ENCODE measurements at regions of chr1 and their contacts with region 1.

Region 1: DNA sequence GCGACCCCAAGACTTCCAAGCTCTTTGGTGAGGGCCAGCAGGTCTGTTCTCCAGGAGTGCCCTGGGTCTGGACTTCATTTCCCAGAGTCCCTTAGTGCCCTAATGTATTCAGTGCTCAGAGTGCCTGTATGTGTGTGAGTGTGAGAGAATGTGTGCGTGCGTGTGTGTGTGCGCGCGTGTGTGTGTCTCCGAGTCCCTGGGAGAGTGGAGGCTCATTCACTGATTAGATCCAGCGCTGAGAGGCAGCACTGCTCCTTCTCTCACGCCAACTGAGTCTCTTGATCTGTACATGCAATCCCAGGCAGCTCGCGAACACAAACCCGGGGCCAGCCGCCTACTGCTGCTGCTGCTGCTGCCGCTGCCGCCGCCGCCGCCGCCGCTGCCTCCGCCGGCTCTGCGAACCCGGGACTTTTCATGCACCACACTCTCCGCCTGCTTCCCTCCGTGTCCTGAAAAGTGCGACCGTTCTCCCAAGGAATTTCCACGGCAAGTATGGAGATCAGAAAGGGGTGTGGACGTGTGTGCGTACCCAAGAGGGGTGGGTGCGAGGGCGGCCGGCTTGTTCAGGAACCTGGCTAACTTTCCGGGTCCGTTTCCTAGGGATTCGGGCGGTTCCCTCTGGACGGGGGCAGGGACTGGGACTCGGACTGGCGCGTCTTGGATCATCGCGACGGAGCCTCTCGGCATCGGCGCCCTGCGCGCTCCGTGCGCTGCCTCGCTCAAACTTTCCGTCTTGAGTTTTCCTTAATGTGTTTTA is at the start of gene RNF220:
- DNase-seq: peak; percentile 64
- H3K4me3 Mint-ChIP-seq: peak within 1 kb of the TSS; percentile 79
- H3K27ac Mint-ChIP-seq: peak within 1 kb of the TSS; percentile 22
- H3K4me1 Mint-ChIP-seq: peaks cover 30% of the 10 kb centered on the region
- H3K27me3 Mint-ChIP-seq: peaks cover 70% of the 10 kb centered on the region
- total RNA-seq, gene RNF220: 71.6 to 81.6 TPM

Region 2: DNA sequence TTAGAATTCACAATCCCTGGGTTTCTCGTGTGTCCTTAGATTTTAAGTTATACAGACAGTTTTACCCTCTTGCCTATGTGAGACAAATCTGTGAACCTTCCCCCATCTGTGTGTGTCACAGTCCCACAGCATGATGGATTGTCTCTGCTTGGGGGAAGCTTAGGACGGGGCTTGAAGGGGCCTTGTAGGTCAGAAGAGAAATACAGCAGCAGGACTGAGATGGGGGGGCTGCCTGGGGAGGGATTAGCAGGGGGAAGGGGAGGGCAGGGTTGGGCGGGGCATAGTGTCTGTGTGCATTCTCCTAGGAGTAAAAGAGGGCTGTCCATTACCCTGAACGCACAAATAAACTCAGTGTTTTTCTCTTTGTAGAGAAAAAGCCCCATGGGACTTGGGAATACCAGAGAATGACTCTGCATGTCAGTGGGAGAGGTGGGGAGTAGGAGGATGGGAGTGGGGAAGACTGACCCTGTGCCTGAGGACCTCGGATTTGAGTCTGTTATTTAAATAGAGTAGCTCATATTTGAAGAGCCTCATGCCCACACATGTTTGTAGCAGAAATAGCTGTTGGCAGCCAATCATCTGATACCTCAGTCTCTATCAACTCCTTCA is 16.3 kb after region 1 on chr1:
- CTCF ChIA-PET with region 1: no interaction called
- intact Hi-C with region 1: loop called (anchors 2 kb)
- DNase-seq: no peak
- H3K4me3 Mint-ChIP-seq: no peak overlapping the region
- H3K27ac Mint-ChIP-seq: no peak overlapping the region
- H3K4me1 Mint-ChIP-seq: peaks cover 13% of the 10 kb centered on the region
- H3K27me3 Mint-ChIP-seq: peaks cover 58% of the 10 kb centered on the region

Measured in activated naive CD4-positive, alpha-beta T cell treated with anti-CD3 and anti-CD28 coated beads for 36 hours (primary cell).